Right lobe of liver (tissue), 6 donors: ENCODE measurements at regions of chr1 and their contacts with region 1.

Region 1: GRCh38 chr1:181189691-181190363 is 101.3 kb downstream of the IER5 start:
- DNase-seq: peak; percentile 58 to 65 (median 59)
- ATAC-seq: peak; percentile 85 to 94 (median 90)
- H3K4me3 ChIP-seq: peak overlapping the region in 1 of 3 donors; percentile 17
- H3K27ac ChIP-seq: no peak overlapping the region
- H3K4me1 ChIP-seq: peaks cover 0 to 5% (median 0%) of the 10 kb centered on the region in 4 donors
- H3K27me3 ChIP-seq: no peaks in the 10 kb centered on the region
- CTCF ChIP-seq: peak; percentile 87 to 96 (median 95)
- POLR2A ChIP-seq: no peak

Region 2: DNA sequence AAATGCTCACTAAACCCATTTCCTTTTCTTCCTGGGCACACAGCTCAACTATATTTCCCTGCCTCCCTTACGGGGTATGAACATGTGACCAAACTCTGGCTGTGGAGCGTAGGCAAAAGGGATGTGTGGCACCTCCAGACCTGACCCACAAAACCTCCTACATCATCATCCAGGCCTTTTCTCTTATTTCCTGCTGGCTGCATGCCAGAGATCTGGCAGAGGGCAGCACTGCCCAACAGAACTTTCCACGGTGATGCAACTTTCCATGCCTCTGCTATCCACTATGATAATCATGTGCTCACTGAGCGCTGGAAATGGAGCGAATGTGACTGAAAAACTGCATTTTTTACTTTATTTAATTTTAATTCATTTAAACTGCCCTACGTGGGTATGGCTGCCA is 193.9 kb after region 1 on chr1:
- intact Hi-C with region 1: no loop called
- DNase-seq: peak in 1 of 3 donors; percentile 26
- ATAC-seq: peak in 2 of 4 donors; percentile 30 to 75
- H3K4me3 ChIP-seq: no peak overlapping the region
- H3K27ac ChIP-seq: no peak overlapping the region
- H3K4me1 ChIP-seq: no peaks in the 10 kb centered on the region
- H3K27me3 ChIP-seq: no peaks in the 10 kb centered on the region
- CTCF ChIP-seq: no peak
- POLR2A ChIP-seq: no peak

Region 3: GRCh38 chr1:181424786-181425403 is 235.1 kb after region 1 on chr1:
- intact Hi-C with region 1: loop called (anchors 5 kb)
- DNase-seq: peak; percentile 61 to 66 (median 62)
- ATAC-seq: peak; percentile 75 to 93 (median 87)
- H3K4me3 ChIP-seq: no peak overlapping the region
- H3K27ac ChIP-seq: no peak overlapping the region
- H3K4me1 ChIP-seq: no peaks in the 10 kb centered on the region
- H3K27me3 ChIP-seq: no peaks in the 10 kb centered on the region
- CTCF ChIP-seq: peak; percentile 95 to 97 (median 96)
- POLR2A ChIP-seq: no peak